MCF 10A (cell line): ENCODE measurements at regions of chr13 and their contacts with region 1.

Region 1: DNA sequence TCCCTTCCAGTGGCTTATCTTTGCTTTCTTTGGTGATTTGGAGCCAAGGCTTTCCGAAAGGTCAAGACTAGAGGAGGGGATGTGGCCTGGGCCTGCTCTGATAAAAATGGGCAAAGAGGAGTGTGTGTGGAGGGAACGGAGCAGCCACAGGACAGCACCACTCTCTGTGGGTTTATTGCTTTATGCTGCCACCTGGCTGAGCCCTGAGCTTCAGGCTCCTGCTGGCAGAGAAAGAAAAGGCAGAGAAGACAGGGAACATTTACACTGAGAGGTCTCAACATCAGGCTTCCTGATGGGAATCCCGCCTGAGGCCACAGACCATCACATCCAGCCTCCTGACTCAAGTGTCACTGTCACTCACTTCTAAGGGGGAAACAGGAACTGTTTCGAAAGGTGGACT is 9.2 kb upstream of the GSX1 start:
- DNase-seq: peak; percentile 13
- H3K4me3 Mint-ChIP-seq: no peak overlapping the region
- H3K27ac Mint-ChIP-seq: no peak overlapping the region
- H3K4me1 Mint-ChIP-seq: no peaks in the 10 kb centered on the region
- H3K27me3 Mint-ChIP-seq: peaks cover 27% of the 10 kb centered on the region
- CTCF ChIP-seq: peak; percentile 22

Region 2: DNA sequence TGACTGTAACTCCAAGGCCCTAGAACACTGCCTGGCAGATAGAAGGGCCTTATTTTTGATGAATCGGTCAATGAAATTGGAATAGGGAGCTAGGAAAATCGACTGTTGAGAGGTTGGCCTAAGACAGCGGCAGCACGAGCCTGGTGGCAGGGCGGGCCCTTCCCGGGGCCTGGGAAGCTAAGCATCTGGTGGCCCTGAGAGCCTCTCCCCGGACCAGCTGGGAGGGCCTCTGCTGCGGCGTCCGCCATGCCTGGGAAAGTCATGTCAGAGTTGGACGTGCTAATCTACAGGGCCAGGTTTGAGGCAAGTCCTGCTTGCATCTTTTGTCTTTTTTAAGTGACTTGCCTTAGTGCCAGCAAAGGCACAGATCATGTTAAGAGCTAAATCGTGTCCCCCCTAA is 1011.3 kb before region 1 on chr13:
- CTCF ChIA-PET with region 1: no interaction called
- POLR2A ChIA-PET with region 1: no interaction called
- intact Hi-C with region 1: no loop called
- DNase-seq: no peak
- H3K4me3 Mint-ChIP-seq: no peak overlapping the region
- H3K27ac Mint-ChIP-seq: no peak overlapping the region
- H3K4me1 Mint-ChIP-seq: no peaks in the 10 kb centered on the region
- H3K27me3 Mint-ChIP-seq: peaks cover 14% of the 10 kb centered on the region
- CTCF ChIP-seq: no peak

Region 3: DNA sequence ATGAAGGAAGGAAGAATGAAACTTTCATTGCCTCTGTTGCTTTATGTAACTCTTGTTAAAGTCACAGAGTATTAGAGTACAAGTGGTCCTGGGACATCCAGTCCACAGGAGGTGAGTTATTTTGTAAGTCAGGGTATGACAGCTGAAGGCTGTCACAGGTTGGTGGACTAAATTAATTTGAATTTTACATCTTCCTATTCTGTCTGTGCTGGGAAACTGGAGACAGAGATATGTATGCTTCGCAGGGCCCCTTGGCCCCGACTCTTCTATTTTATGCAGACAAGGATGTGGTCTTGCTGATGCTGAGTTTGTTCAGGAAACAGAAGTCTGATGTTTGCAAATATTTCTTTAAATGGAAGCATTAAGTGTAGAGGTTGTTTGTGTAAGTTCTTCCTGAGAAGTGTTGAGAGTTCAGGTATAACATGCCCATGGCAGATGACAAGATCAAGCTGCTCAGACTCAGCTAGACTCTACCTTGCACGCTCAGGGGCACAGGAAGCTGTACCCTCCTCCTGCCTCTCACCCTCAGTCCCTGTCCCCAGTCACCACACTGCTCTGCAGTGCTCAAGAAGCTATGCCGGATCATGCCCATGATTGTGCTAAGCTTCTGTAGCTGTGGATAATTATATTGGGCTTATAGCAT is 489.1 kb before region 1 on chr13:
- CTCF ChIA-PET with region 1: no interaction called
- POLR2A ChIA-PET with region 1: no interaction called
- intact Hi-C with region 1: no loop called
- DNase-seq: no peak
- H3K4me3 Mint-ChIP-seq: no peak overlapping the region
- H3K27ac Mint-ChIP-seq: no peak overlapping the region
- H3K4me1 Mint-ChIP-seq: no peaks in the 10 kb centered on the region
- H3K27me3 Mint-ChIP-seq: peaks cover 42% of the 10 kb centered on the region
- CTCF ChIP-seq: no peak

Region 4: DNA sequence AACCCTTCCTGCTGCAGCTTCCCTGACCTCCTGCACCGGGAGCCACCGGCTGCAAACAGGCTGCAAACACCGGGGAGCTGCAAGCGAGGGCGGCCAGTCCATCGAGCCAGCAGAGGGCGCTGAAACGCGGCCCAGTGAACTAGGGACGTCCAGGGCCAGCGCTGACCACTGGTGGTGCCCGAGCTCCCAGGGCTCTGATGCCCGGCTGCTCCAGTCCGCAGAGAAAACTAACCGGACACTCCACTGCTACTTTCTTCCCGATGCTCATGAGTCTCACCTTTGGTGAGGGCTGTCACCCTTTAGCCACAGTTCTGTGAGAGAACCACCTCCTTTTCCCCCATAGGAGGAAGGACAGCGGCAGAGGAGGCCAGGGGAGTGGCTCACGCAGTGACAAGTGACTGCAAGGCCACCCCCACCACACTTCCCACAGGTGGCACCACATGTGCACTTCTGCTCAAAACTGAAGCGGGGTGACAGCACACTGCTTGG is 249.9 kb before region 1 on chr13:
- CTCF ChIA-PET with region 1: interaction called, 10 read pairs
- POLR2A ChIA-PET with region 1: no interaction called
- intact Hi-C with region 1: no loop called
- DNase-seq: peak; percentile 74
- H3K4me3 Mint-ChIP-seq: no peak overlapping the region
- H3K27ac Mint-ChIP-seq: no peak overlapping the region
- H3K4me1 Mint-ChIP-seq: peaks cover 8% of the 10 kb centered on the region
- H3K27me3 Mint-ChIP-seq: no peaks in the 10 kb centered on the region
- CTCF ChIP-seq: peak; percentile 80

Region 5: GRCh38 chr13:27556109-27556508 is 227.0 kb before region 1 on chr13:
- CTCF ChIA-PET with region 1: no interaction called
- POLR2A ChIA-PET with region 1: no interaction called
- intact Hi-C with region 1: loop called (anchors 1 kb)
- DNase-seq: peak; percentile 83
- H3K4me3 Mint-ChIP-seq: no peak overlapping the region
- H3K27ac Mint-ChIP-seq: no peak overlapping the region
- H3K4me1 Mint-ChIP-seq: peaks cover 10% of the 10 kb centered on the region
- H3K27me3 Mint-ChIP-seq: no peaks in the 10 kb centered on the region
- CTCF ChIP-seq: peak; percentile 10

Region 6: DNA sequence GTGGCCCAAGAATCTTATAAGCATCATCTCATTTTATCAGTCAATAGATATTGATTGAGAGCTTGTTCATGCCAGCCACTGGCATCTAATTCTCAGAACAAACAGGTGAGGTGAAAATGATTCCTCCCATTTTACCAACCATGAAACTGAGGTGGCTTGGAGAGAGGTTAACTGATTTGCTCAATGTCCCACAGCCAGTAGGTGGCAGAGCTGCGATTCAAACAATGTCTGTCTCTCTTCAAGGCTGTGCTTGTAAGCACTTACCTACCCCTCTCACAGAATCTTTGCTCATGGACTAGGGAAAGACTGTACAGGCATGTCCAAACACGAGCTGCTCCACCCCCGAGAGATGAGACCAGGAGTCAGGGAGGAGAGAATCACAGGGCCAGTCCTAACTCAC is 12.3 kb before region 1 on chr13:
- CTCF ChIA-PET with region 1: interaction called, 35 read pairs
- POLR2A ChIA-PET with region 1: interaction called, 5 read pairs
- intact Hi-C with region 1: no loop called
- DNase-seq: peak; percentile 66
- H3K4me3 Mint-ChIP-seq: no peak overlapping the region
- H3K27ac Mint-ChIP-seq: no peak overlapping the region
- H3K4me1 Mint-ChIP-seq: peaks cover 6% of the 10 kb centered on the region
- H3K27me3 Mint-ChIP-seq: no peaks in the 10 kb centered on the region
- CTCF ChIP-seq: peak; percentile 45